MCF 10A (cell line): ENCODE measurements at regions of chr13 and their contacts with region 1.

Region 1: GRCh38 chr13:77492982-77493381 is 42.5 kb upstream of the SCEL start:
- DNase-seq: peak; percentile 49
- H3K4me3 Mint-ChIP-seq: no peak overlapping the region
- H3K27ac Mint-ChIP-seq: no peak overlapping the region
- H3K4me1 Mint-ChIP-seq: no peaks in the 10 kb centered on the region
- H3K27me3 Mint-ChIP-seq: peaks cover 80% of the 10 kb centered on the region
- CTCF ChIP-seq: peak; percentile 58

Region 2: GRCh38 chr13:77143435-77143834 is 349.5 kb before region 1 on chr13:
- CTCF ChIA-PET with region 1: no interaction called
- POLR2A ChIA-PET with region 1: no interaction called
- intact Hi-C with region 1: no loop called
- DNase-seq: peak; percentile 77
- H3K4me3 Mint-ChIP-seq: no peak overlapping the region
- H3K27ac Mint-ChIP-seq: no peak overlapping the region
- H3K4me1 Mint-ChIP-seq: peaks cover 7% of the 10 kb centered on the region
- H3K27me3 Mint-ChIP-seq: no peaks in the 10 kb centered on the region
- CTCF ChIP-seq: no peak

Region 3: GRCh38 chr13:77353995-77354394 is 139.0 kb before region 1 on chr13:
- CTCF ChIA-PET with region 1: no interaction called
- POLR2A ChIA-PET with region 1: no interaction called
- intact Hi-C with region 1: no loop called
- DNase-seq: no peak
- H3K4me3 Mint-ChIP-seq: no peak overlapping the region
- H3K27ac Mint-ChIP-seq: no peak overlapping the region
- H3K4me1 Mint-ChIP-seq: no peaks in the 10 kb centered on the region
- H3K27me3 Mint-ChIP-seq: peaks cover 93% of the 10 kb centered on the region
- CTCF ChIP-seq: no peak

Region 4: GRCh38 chr13:77506874-77507273 is 13.9 kb after region 1 on chr13:
- CTCF ChIA-PET with region 1: interaction called, 39 read pairs
- POLR2A ChIA-PET with region 1: no interaction called
- intact Hi-C with region 1: loop called (anchors 1 kb)
- DNase-seq: peak; percentile 27
- H3K4me3 Mint-ChIP-seq: no peak overlapping the region
- H3K27ac Mint-ChIP-seq: no peak overlapping the region
- H3K4me1 Mint-ChIP-seq: peaks cover 18% of the 10 kb centered on the region
- H3K27me3 Mint-ChIP-seq: peaks cover 51% of the 10 kb centered on the region
- CTCF ChIP-seq: peak; percentile 26

Region 5: GRCh38 chr13:77537289-77537919 is 44.4 kb after region 1 on chr13:
- CTCF ChIA-PET with region 1: interaction called, 15 read pairs
- POLR2A ChIA-PET with region 1: no interaction called
- intact Hi-C with region 1: no loop called
- DNase-seq: peak; percentile 34
- H3K4me3 Mint-ChIP-seq: no peak overlapping the region
- H3K27ac Mint-ChIP-seq: no peak overlapping the region
- H3K4me1 Mint-ChIP-seq: peaks cover 21% of the 10 kb centered on the region
- H3K27me3 Mint-ChIP-seq: peaks cover 16% of the 10 kb centered on the region
- CTCF ChIP-seq: no peak

Region 6: GRCh38 chr13:77554069-77554468 is 61.1 kb after region 1 on chr13:
- CTCF ChIA-PET with region 1: interaction called, 10 read pairs
- POLR2A ChIA-PET with region 1: no interaction called
- intact Hi-C with region 1: no loop called
- DNase-seq: no peak
- H3K4me3 Mint-ChIP-seq: no peak overlapping the region
- H3K27ac Mint-ChIP-seq: no peak overlapping the region
- H3K4me1 Mint-ChIP-seq: no peaks in the 10 kb centered on the region
- H3K27me3 Mint-ChIP-seq: peaks cover 11% of the 10 kb centered on the region
- CTCF ChIP-seq: no peak

Region 7: DNA sequence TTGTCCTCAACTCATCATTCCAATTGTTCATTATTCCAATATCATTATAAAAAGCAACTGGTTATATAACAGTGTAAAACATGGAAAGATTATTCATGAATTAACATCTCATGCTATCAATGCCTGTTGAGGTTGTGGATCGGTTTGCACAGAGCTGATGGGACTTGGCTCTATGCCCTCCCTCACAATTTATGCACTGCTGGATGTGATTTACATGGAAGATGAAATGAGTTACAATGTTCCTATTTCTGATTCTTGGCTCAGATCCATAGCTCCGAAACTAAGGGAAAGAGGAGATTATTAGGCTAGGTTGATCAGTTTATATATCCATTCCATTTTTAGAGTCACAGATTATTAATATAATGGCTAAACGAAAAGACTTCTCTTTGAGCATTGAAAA is 81.1 kb after region 1 on chr13:
- CTCF ChIA-PET with region 1: interaction called, 12 read pairs
- POLR2A ChIA-PET with region 1: no interaction called
- intact Hi-C with region 1: no loop called
- DNase-seq: no peak
- H3K4me3 Mint-ChIP-seq: no peak overlapping the region
- H3K27ac Mint-ChIP-seq: no peak overlapping the region
- H3K4me1 Mint-ChIP-seq: no peaks in the 10 kb centered on the region
- H3K27me3 Mint-ChIP-seq: peaks cover 56% of the 10 kb centered on the region
- CTCF ChIP-seq: no peak